B cell (primary cell): ENCODE measurements at regions of chr15 and their contacts with region 1.

Region 1: GRCh38 chr15:45402162-45402954 is 24.0 kb upstream of the GATM start:
- DNase-seq: peak; percentile 98
- ATAC-seq: peak; percentile 91
- H3K4me3 ChIP-seq: peak overlapping the region; percentile 62 to 89 (median 86)
- H3K4me3 Mint-ChIP-seq: peak overlapping the region; percentile 96
- H3K27ac ChIP-seq: peak overlapping the region; percentile 88 to 95
- H3K27ac Mint-ChIP-seq: peak overlapping the region; percentile 97
- H3K4me1 ChIP-seq: peaks cover 22% of the 10 kb centered on the region in 2 donors
- H3K4me1 Mint-ChIP-seq: peaks cover 37% of the 10 kb centered on the region
- H3K27me3 ChIP-seq: no peaks in the 10 kb centered on the region
- H3K27me3 Mint-ChIP-seq: no peaks in the 10 kb centered on the region
- CTCF ChIP-seq: no peak

Region 2: GRCh38 chr15:44426975-44427755 is 975.2 kb before region 1 on chr15 and contains the start of gene CTDSPL2:
- CTCF ChIA-PET with region 1: no interaction called
- POLR2A ChIA-PET with region 1: no interaction called
- intact Hi-C with region 1: loop called (anchors 5 kb)
- DNase-seq: peak; percentile 94
- ATAC-seq: peak; percentile 97
- H3K4me3 ChIP-seq: peak within 1 kb of the TSS; percentile 93 to 100 (median 98)
- H3K4me3 Mint-ChIP-seq: peak within 1 kb of the TSS; percentile 96
- H3K27ac ChIP-seq: peak within 1 kb of the TSS; percentile 95 to 98
- H3K27ac Mint-ChIP-seq: peak within 1 kb of the TSS; percentile 98
- H3K4me1 ChIP-seq: peaks cover 18 to 23% of the 10 kb centered on the region in 2 donors
- H3K4me1 Mint-ChIP-seq: peaks cover 46% of the 10 kb centered on the region
- H3K27me3 ChIP-seq: no peaks in the 10 kb centered on the region
- H3K27me3 Mint-ChIP-seq: no peaks in the 10 kb centered on the region
- CTCF ChIP-seq: peak; percentile 34
- total RNA-seq, gene CTDSPL2: 79.5 and 84.1 TPM in 2 replicates

Region 3: GRCh38 chr15:45166834-45167630 is 235.3 kb before region 1 on chr15:
- CTCF ChIA-PET with region 1: interaction called, 128 read pairs
- POLR2A ChIA-PET with region 1: no interaction called
- intact Hi-C with region 1: loop called (anchors 1 kb)
- DNase-seq: peak; percentile 89
- ATAC-seq: peak; percentile 94
- H3K4me3 ChIP-seq: peak overlapping the region; percentile 45 to 84 (median 81)
- H3K4me3 Mint-ChIP-seq: peak overlapping the region; percentile 80
- H3K27ac ChIP-seq: peak overlapping the region; percentile 89 to 96
- H3K27ac Mint-ChIP-seq: peak overlapping the region; percentile 92
- H3K4me1 ChIP-seq: peaks cover 12 to 46% of the 10 kb centered on the region in 2 donors
- H3K4me1 Mint-ChIP-seq: peaks cover 31% of the 10 kb centered on the region
- H3K27me3 ChIP-seq: no peaks in the 10 kb centered on the region
- H3K27me3 Mint-ChIP-seq: no peaks in the 10 kb centered on the region
- CTCF ChIP-seq: peak; percentile 75

Region 4: DNA sequence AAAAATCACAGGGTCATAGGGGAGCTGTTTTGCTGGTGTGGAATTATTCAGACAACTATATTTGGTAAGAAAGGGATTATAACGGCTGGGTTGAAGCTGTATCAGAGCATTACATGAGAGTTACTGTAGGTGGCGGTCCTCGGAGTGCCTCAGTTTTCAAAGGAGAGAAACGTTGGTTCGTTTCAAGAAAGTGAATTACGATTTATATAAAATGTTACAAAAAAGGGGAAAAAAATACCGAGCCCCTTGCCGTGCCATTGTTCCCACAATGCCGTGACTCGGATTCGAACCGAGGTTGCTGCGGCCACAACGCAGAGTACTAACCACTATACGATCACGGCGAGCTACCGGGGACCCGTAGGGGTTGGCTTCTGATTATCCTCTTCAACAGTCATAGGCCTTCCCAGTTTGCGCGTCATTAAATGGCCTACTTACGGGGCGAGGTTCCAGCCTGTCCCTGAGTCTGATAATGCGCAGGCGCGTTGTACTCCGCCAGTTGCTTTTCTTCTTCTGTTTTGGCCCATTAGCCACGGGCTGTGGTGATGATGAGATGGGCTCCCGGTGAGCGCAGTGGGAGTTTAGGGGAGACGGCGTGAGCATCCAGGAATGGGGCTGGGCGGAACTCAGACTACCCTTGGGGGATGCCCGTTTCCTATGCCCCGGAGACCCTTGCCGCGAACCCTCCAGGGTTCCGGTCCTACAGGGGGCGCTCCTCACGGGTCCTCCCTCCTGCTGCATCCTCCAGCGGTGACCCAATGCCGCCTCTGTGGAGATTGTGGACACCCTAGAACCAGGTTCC is 203.8 kb before region 1 on chr15:
- CTCF ChIA-PET with region 1: interaction called, 32 read pairs
- POLR2A ChIA-PET with region 1: interaction called, 24 read pairs
- intact Hi-C with region 1: loop called (anchors 1 kb)
- DNase-seq: peak; percentile 100
- ATAC-seq: peak; percentile 62
- H3K4me3 ChIP-seq: peak overlapping the region; percentile 72 to 95 (median 85)
- H3K4me3 Mint-ChIP-seq: no peak overlapping the region
- H3K27ac ChIP-seq: peak overlapping the region; percentile 96 to 97
- H3K27ac Mint-ChIP-seq: no peak overlapping the region
- H3K4me1 ChIP-seq: peaks cover 11 to 18% of the 10 kb centered on the region in 2 donors
- H3K4me1 Mint-ChIP-seq: peaks cover 10% of the 10 kb centered on the region
- H3K27me3 ChIP-seq: no peaks in the 10 kb centered on the region
- H3K27me3 Mint-ChIP-seq: no peaks in the 10 kb centered on the region
- CTCF ChIP-seq: peak; percentile 68

Region 5: DNA sequence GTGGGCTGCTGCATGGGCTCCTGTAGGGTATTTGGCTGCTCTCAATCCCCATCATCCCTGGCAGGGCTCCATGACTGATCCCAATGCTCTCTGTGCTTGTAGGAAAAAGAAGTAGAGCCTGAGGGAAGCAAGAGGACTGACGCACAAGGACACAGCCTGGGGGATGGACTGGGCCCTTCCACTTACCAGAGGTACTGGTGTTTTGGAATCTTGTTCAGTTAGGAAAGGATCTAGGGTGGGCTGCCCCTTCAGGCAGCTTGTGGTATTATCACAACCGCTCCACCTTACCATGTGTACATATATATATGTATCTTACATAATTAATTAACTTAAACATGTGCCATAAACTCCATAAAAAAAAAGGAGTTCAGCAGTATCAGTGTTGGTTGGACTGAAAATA is 149.0 kb before region 1 on chr15:
- CTCF ChIA-PET with region 1: no interaction called
- POLR2A ChIA-PET with region 1: no interaction called
- intact Hi-C with region 1: no loop called
- DNase-seq: no peak
- ATAC-seq: no peak
- H3K4me3 ChIP-seq: no peak overlapping the region
- H3K4me3 Mint-ChIP-seq: no peak overlapping the region
- H3K27ac ChIP-seq: no peak overlapping the region
- H3K27ac Mint-ChIP-seq: no peak overlapping the region
- H3K4me1 ChIP-seq: no peaks in the 10 kb centered on the region
- H3K4me1 Mint-ChIP-seq: no peaks in the 10 kb centered on the region
- H3K27me3 ChIP-seq: no peaks in the 10 kb centered on the region
- H3K27me3 Mint-ChIP-seq: peaks cover 7% of the 10 kb centered on the region
- CTCF ChIP-seq: peak; percentile 57

Region 6: GRCh38 chr15:45307230-45307924 is 95.0 kb before region 1 on chr15:
- CTCF ChIA-PET with region 1: interaction called, 44 read pairs
- POLR2A ChIA-PET with region 1: no interaction called
- intact Hi-C with region 1: loop called (anchors 1 kb)
- DNase-seq: peak; percentile 58
- ATAC-seq: peak; percentile 51
- H3K4me3 ChIP-seq: peak overlapping the region in 3 of 5 experiments; percentile 33 to 49 (median 41)
- H3K4me3 Mint-ChIP-seq: peak overlapping the region; percentile 71
- H3K27ac ChIP-seq: no peak overlapping the region
- H3K27ac Mint-ChIP-seq: no peak overlapping the region
- H3K4me1 ChIP-seq: peaks cover 0 to 3% of the 10 kb centered on the region in 2 donors
- H3K4me1 Mint-ChIP-seq: peaks cover 4% of the 10 kb centered on the region
- H3K27me3 ChIP-seq: peaks cover 0 to 14% (median 7%) of the 10 kb centered on the region in 4 experiments
- H3K27me3 Mint-ChIP-seq: peaks cover 29% of the 10 kb centered on the region
- CTCF ChIP-seq: peak; percentile 69

Region 7: GRCh38 chr15:45384700-45385099 is 17.7 kb before region 1 on chr15:
- CTCF ChIA-PET with region 1: interaction called, 45 read pairs
- POLR2A ChIA-PET with region 1: interaction called, 4 read pairs
- intact Hi-C with region 1: no loop called
- DNase-seq: no peak
- ATAC-seq: no peak
- H3K4me3 ChIP-seq: no peak overlapping the region
- H3K4me3 Mint-ChIP-seq: no peak overlapping the region
- H3K27ac ChIP-seq: no peak overlapping the region
- H3K27ac Mint-ChIP-seq: no peak overlapping the region
- H3K4me1 ChIP-seq: no peaks in the 10 kb centered on the region
- H3K4me1 Mint-ChIP-seq: peaks cover 3% of the 10 kb centered on the region
- H3K27me3 ChIP-seq: no peaks in the 10 kb centered on the region
- H3K27me3 Mint-ChIP-seq: peaks cover 4% of the 10 kb centered on the region
- CTCF ChIP-seq: no peak

Region 8: GRCh38 chr15:45457641-45458433 is 55.5 kb after region 1 on chr15:
- CTCF ChIA-PET with region 1: interaction called, 10 read pairs
- POLR2A ChIA-PET with region 1: no interaction called
- intact Hi-C with region 1: loop called (anchors 1 kb)
- DNase-seq: peak; percentile 92
- ATAC-seq: peak; percentile 73
- H3K4me3 ChIP-seq: peak overlapping the region; percentile 29 to 74 (median 49)
- H3K4me3 Mint-ChIP-seq: peak overlapping the region; percentile 84
- H3K27ac ChIP-seq: peak overlapping the region; percentile 52 to 62
- H3K27ac Mint-ChIP-seq: peak overlapping the region; percentile 72
- H3K4me1 ChIP-seq: peaks cover 34 to 37% of the 10 kb centered on the region in 2 donors
- H3K4me1 Mint-ChIP-seq: peaks cover 42% of the 10 kb centered on the region
- H3K27me3 ChIP-seq: no peaks in the 10 kb centered on the region
- H3K27me3 Mint-ChIP-seq: no peaks in the 10 kb centered on the region
- CTCF ChIP-seq: peak; percentile 94